PC-3 (cell line): ENCODE measurements at regions of chr22 and their contacts with region 1.

Region 1: GRCh38 chr22:32796865-32797573 is 4.5 kb upstream of the TIMP3 start:
- DNase-seq: peak; percentile 22
- ATAC-seq: no peak
- H3K4me3 ChIP-seq: no peak overlapping the region
- H3K27ac ChIP-seq: no peak overlapping the region
- H3K4me1 ChIP-seq: no peaks in the 10 kb centered on the region
- H3K27me3 ChIP-seq: peaks cover 2% of the 10 kb centered on the region; the same call in 1 of the 2 replicates
- CTCF ChIP-seq: peak; percentile 53

Region 2: GRCh38 chr22:32660292-32660691 is 136.7 kb before region 1 on chr22:
- CTCF ChIA-PET with region 1: interaction called, 3 read pairs
- POLR2A ChIA-PET with region 1: no interaction called
- intact Hi-C with region 1: loop called (anchors 10 kb)
- DNase-seq: peak; percentile 16
- ATAC-seq: no peak
- H3K4me3 ChIP-seq: no peak overlapping the region
- H3K27ac ChIP-seq: no peak overlapping the region
- H3K4me1 ChIP-seq: no peaks in the 10 kb centered on the region
- H3K27me3 ChIP-seq: no peaks in the 10 kb centered on the region
- CTCF ChIP-seq: peak; percentile 46

Region 3: GRCh38 chr22:32775957-32776356 is 21.1 kb before region 1 on chr22:
- CTCF ChIA-PET with region 1: no interaction called
- POLR2A ChIA-PET with region 1: no interaction called
- intact Hi-C with region 1: no loop called
- DNase-seq: no peak
- ATAC-seq: no peak
- H3K4me3 ChIP-seq: no peak overlapping the region
- H3K27ac ChIP-seq: no peak overlapping the region
- H3K4me1 ChIP-seq: no peaks in the 10 kb centered on the region
- H3K27me3 ChIP-seq: no peaks in the 10 kb centered on the region
- CTCF ChIP-seq: peak; percentile 21; the same call in 1 of the 2 replicates

Region 4: GRCh38 chr22:32852395-32853251 is 55.6 kb after region 1 on chr22:
- CTCF ChIA-PET with region 1: no interaction called
- POLR2A ChIA-PET with region 1: no interaction called
- intact Hi-C with region 1: no loop called
- DNase-seq: no peak
- ATAC-seq: no peak
- H3K4me3 ChIP-seq: no peak overlapping the region
- H3K27ac ChIP-seq: no peak overlapping the region
- H3K4me1 ChIP-seq: no peaks in the 10 kb centered on the region
- H3K27me3 ChIP-seq: no peaks in the 10 kb centered on the region
- CTCF ChIP-seq: no peak